GM12878 (cell line): ENCODE measurements at regions of chr4 and their contacts with region 1.

Region 1: GRCh38 chr4:161564230-161564834 is 599.5 kb downstream of the FSTL5 start:
- DNase-seq: no peak
- ATAC-seq: no peak
- H3K4me3 ChIP-seq: no peak overlapping the region
- H3K27ac ChIP-seq: no peak overlapping the region
- H3K4me1 ChIP-seq: no peaks in the 10 kb centered on the region
- H3K27me3 ChIP-seq: no peaks in the 10 kb centered on the region
- CTCF ChIP-seq: peak in 1 of 3 experiments; percentile 15; a peak in 1 of 6 replicates
- EP300 ChIP-seq: no peak
- POLR2A ChIP-seq: no peak
- RAD21 ChIP-seq: no peak

Region 2: DNA sequence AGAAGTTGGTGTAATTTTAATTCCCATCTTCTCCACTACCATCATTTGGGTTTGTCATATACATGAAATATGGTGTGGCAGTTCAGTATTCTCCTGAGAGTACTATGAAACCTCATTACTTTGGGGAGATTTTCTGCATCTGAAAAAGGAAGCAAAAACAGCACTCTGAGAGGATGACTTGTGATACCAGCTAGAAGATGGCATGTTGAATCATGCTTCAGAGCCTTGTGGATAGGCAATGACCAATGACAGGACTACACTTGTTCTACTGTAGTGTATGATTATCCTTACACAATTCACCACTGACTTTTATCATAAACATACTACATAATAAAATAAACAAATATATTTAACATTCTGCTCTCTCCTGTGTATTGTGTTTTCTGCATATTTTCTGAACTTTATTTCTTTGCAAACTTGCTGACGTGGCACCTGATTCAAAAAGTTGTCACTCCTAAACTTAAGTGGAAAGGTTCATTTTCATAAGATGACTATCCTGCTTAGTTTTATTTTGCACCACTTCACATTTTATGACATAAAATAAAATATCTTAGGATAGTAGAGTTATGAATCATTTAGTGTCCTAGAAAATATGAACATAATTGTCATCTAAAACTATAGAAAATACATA is 391.8 kb before region 1 on chr4:
- CTCF ChIA-PET with region 1: no interaction called
- POLR2A ChIA-PET with region 1: no interaction called
- RAD21 ChIA-PET with region 1: no interaction called
- SMC1A ChIA-PET with region 1: no interaction called
- in situ Hi-C with region 1: no loop called
- intact Hi-C with region 1: no loop called
- DNase-seq: no peak
- ATAC-seq: peak; percentile 50
- H3K4me3 ChIP-seq: no peak overlapping the region
- H3K27ac ChIP-seq: no peak overlapping the region
- H3K4me1 ChIP-seq: no peaks in the 10 kb centered on the region
- H3K27me3 ChIP-seq: no peaks in the 10 kb centered on the region
- CTCF ChIP-seq: no peak
- EP300 ChIP-seq: no peak
- POLR2A ChIP-seq: no peak
- RAD21 ChIP-seq: no peak

Region 3: DNA sequence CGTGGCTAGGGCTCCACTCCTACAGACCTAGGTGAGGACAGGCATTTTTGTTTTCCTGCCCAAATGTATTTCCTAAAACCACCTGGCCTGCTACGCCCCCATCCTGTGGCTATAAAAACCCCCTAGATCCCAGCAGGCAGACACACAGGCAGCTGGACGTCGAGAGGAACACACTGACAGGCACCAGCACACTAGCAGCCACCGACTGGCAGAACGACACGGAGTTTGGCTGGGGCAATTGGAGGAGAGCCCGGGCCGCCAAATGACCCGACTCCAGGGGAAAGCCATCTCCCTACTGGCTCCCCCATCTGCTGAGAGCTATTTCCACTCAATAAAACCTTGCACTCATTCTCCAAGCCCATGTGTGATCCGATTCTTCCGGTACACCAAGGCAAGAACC is 83.4 kb after region 1 on chr4:
- CTCF ChIA-PET with region 1: interaction called, 4 read pairs
- POLR2A ChIA-PET with region 1: no interaction called
- RAD21 ChIA-PET with region 1: interaction called, 3 read pairs
- SMC1A ChIA-PET with region 1: interaction called, 3 read pairs
- in situ Hi-C with region 1: loop called (anchors 5 kb)
- intact Hi-C with region 1: no loop called
- DNase-seq: no peak
- ATAC-seq: no peak
- H3K4me3 ChIP-seq: no peak overlapping the region
- H3K27ac ChIP-seq: no peak overlapping the region
- H3K4me1 ChIP-seq: no peaks in the 10 kb centered on the region
- H3K27me3 ChIP-seq: no peaks in the 10 kb centered on the region
- CTCF ChIP-seq: no peak
- EP300 ChIP-seq: no peak
- POLR2A ChIP-seq: no peak
- RAD21 ChIP-seq: no peak

Region 4: DNA sequence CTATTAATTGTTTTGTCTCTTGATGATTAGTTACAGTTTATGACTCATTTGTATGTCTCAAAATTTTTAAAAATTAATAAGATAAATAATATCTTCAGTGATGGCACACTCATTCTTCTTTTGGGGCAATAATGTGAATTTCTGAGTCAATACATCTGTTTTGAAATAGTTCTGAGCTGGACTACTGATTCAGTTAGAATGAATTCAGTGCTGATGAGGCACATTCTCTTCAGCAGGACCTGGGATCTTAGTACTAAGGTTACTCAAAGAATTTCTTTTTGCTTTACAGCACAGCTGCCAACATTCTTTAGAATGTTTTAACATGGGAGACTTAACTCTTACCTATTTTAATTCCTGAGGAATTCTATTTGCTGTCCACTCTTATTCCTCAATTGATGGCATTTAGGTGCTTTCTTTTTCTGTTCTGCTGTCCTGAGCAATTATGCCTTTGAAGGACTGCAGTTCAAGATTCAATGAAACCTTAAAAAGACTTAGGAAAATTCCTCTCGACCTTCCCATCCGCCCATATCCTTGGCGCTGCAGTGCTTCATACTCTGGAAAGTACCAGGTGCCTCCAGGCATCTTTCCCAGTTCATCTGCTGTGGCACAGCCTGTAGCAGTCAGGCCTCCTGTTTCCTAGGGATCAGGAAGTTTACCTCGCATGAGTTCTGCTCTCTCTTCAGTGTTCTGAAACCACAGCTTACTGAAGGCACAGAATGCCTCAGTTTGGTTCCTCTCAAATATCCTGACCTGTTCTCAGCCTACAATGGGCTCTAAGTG is 385.8 kb after region 1 on chr4:
- CTCF ChIA-PET with region 1: interaction called, 18 read pairs
- POLR2A ChIA-PET with region 1: interaction called, 3 read pairs
- RAD21 ChIA-PET with region 1: interaction called, 21 read pairs
- SMC1A ChIA-PET with region 1: interaction called, 19 read pairs
- in situ Hi-C with region 1: no loop called
- intact Hi-C with region 1: loop called (anchors 2 kb)
- DNase-seq: no peak
- ATAC-seq: no peak
- H3K4me3 ChIP-seq: no peak overlapping the region
- H3K27ac ChIP-seq: no peak overlapping the region
- H3K4me1 ChIP-seq: no peaks in the 10 kb centered on the region
- H3K27me3 ChIP-seq: no peaks in the 10 kb centered on the region
- CTCF ChIP-seq: no peak
- EP300 ChIP-seq: no peak
- POLR2A ChIP-seq: no peak
- RAD21 ChIP-seq: no peak

Region 5: GRCh38 chr4:162163852-162164759 is 599.8 kb after region 1 on chr4 and contains the start of gene FSTL5:
- CTCF ChIA-PET with region 1: interaction called, 3 read pairs
- POLR2A ChIA-PET with region 1: no interaction called
- RAD21 ChIA-PET with region 1: no interaction called
- SMC1A ChIA-PET with region 1: interaction called, 5 read pairs
- in situ Hi-C with region 1: no loop called
- intact Hi-C with region 1: loop called (anchors 10 kb)
- DNase-seq: no peak
- ATAC-seq: peak; percentile 80
- H3K4me3 ChIP-seq: peak within 1 kb of the TSS; percentile 16; the same call in 1 of the 2 replicates
- H3K27ac ChIP-seq: no peak within 1 kb of the TSS
- H3K4me1 ChIP-seq: no peaks in the 10 kb centered on the region; the same call in 1 of the 2 replicates
- H3K27me3 ChIP-seq: no peaks in the 10 kb centered on the region
- CTCF ChIP-seq: no peak
- EP300 ChIP-seq: no peak
- POLR2A ChIP-seq: no peak
- RAD21 ChIP-seq: no peak
- polyA plus RNA-seq, gene FSTL5: 0.04 TPM in 1 of 2 experiments, not detected in the other